ENCODE measurements at regions of chr17 and their contacts with region 1.

Region 1: GRCh38 chr17:63697341-63698286 is 2.3 kb downstream of the LIMD2 start:
- DNase-seq: peak in 4 of 5 donors; percentile 54 to 82 (median 60)
- ATAC-seq: peak in 3 of 4 donors; percentile 1 to 33 (median 29)
- H3K4me3 ChIP-seq: peak overlapping the region in 7 of 12 donors; percentile 4 to 76 (median 63)
- H3K27ac ChIP-seq: peak overlapping the region in 6 of 12 donors; percentile 13 to 96 (median 43)
- H3K4me1 ChIP-seq: peaks cover 0 to 54% (median 22%) of the 10 kb centered on the region in 12 donors
- H3K27me3 ChIP-seq: no peaks in the 10 kb centered on the region
- CTCF ChIP-seq: peak; percentile 13 to 67 (median 34)
- POLR2A ChIP-seq: no peak

Region 2: GRCh38 chr17:63621766-63622519 is 75.7 kb before region 1 on chr17 and contains the start of gene MAP3K3:
- intact Hi-C with region 1: loop called in 3 of 10 experiments (anchors 5 to 10 kb)
- DNase-seq: peak; percentile 98 to 100 (median 99)
- ATAC-seq: peak; percentile 95 to 98 (median 97)
- H3K4me3 ChIP-seq: peak within 1 kb of the TSS; percentile 67 to 96 (median 78)
- H3K27ac ChIP-seq: peak within 1 kb of the TSS; percentile 69 to 93 (median 88)
- H3K4me1 ChIP-seq: peaks cover 2 to 44% (median 37%) of the 10 kb centered on the region in 12 donors
- H3K27me3 ChIP-seq: no peaks in the 10 kb centered on the region
- CTCF ChIP-seq: peak in 4 of 12 donors; percentile 29 to 55 (median 48)
- POLR2A ChIP-seq: peak in 1 of 2 donors; percentile 87
- total RNA-seq, gene MAP3K3: 31.0 to 102 (median 58.0) TPM

Region 3: GRCh38 chr17:63634163-63634562 is 63.5 kb before region 1 on chr17:
- intact Hi-C with region 1: loop called in 3 of 10 experiments (anchors 5 to 10 kb)
- DNase-seq: peak in 1 of 5 donors; percentile 16
- ATAC-seq: peak in 3 of 4 donors; percentile 32 to 74 (median 60)
- H3K4me3 ChIP-seq: no peak overlapping the region
- H3K27ac ChIP-seq: peak overlapping the region in 11 of 12 donors; percentile 12 to 93 (median 51)
- H3K4me1 ChIP-seq: peaks cover 7 to 79% (median 55%) of the 10 kb centered on the region in 12 donors
- H3K27me3 ChIP-seq: no peaks in the 10 kb centered on the region
- CTCF ChIP-seq: no peak
- POLR2A ChIP-seq: no peak

Region 4: DNA sequence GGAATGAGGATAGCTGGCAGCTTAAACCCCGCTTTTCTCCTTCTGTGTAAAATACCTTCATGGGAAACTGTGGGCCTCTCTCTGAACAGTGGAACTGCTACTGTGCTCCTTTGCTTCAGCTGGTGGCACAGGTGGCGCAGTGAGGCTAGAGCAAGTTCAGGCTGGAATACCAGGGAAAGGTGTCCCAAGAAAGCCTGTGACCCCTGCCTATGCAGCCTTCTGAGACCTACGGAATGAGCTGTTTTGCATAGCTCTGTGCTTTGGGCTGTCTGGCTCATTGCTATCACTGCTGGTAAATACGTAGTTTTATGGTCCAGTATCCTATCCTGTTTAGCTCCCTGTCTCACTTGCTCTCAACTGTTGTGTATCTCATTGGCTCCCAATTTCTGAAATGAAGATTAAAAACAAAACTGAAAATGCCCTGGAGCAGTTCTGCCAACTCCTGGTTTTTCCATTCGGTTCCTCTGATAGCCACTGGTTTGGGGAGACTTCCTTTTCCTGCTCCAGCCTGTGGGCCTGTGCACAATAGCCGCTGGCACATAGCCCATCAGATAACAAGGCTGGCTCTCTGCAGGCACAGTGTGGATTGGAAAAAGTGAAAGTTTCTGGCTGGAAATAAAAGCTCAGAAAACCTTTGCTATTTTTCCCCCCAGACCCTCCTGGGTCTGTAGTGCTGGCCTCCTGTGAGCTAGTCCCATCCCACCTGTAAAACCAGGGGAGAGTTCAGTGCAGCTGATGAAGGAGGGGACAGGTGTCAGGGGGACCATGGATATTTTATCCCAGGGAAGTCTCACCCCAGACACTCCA is 21.8 kb before region 1 on chr17:
- intact Hi-C with region 1: loop called in 1 of 10 experiments (anchors 1 kb)
- DNase-seq: peak in 4 of 5 donors; percentile 82 to 87 (median 86)
- ATAC-seq: peak; percentile 84 to 93 (median 92)
- H3K4me3 ChIP-seq: peak overlapping the region in 10 of 12 donors; percentile 7 to 47 (median 33)
- H3K27ac ChIP-seq: peak overlapping the region; percentile 43 to 94 (median 86)
- H3K4me1 ChIP-seq: peaks cover 3 to 55% (median 37%) of the 10 kb centered on the region in 12 donors
- H3K27me3 ChIP-seq: no peaks in the 10 kb centered on the region
- CTCF ChIP-seq: no peak
- POLR2A ChIP-seq: no peak

Region 5: GRCh38 chr17:63741221-63742049 is 43.8 kb after region 1 on chr17 and contains the start of gene STRADA:
- intact Hi-C with region 1: loop called in 2 of 10 experiments (anchors 2 to 5 kb)
- DNase-seq: peak; percentile 98 to 99 (median 99)
- ATAC-seq: peak; percentile 99 to 100 (median 100)
- H3K4me3 ChIP-seq: peak within 1 kb of the TSS; percentile 61 to 95 (median 78)
- H3K27ac ChIP-seq: peak within 1 kb of the TSS; percentile 56 to 96 (median 90)
- H3K4me1 ChIP-seq: peaks cover 0 to 22% (median 12%) of the 10 kb centered on the region in 12 donors
- H3K27me3 ChIP-seq: no peaks in the 10 kb centered on the region
- CTCF ChIP-seq: peak in 1 of 12 donors; percentile 6
- POLR2A ChIP-seq: peak; percentile 9 to 86
- total RNA-seq, gene STRADA: 10.2 to 26.1 (median 15.3) TPM

Region 6: DNA sequence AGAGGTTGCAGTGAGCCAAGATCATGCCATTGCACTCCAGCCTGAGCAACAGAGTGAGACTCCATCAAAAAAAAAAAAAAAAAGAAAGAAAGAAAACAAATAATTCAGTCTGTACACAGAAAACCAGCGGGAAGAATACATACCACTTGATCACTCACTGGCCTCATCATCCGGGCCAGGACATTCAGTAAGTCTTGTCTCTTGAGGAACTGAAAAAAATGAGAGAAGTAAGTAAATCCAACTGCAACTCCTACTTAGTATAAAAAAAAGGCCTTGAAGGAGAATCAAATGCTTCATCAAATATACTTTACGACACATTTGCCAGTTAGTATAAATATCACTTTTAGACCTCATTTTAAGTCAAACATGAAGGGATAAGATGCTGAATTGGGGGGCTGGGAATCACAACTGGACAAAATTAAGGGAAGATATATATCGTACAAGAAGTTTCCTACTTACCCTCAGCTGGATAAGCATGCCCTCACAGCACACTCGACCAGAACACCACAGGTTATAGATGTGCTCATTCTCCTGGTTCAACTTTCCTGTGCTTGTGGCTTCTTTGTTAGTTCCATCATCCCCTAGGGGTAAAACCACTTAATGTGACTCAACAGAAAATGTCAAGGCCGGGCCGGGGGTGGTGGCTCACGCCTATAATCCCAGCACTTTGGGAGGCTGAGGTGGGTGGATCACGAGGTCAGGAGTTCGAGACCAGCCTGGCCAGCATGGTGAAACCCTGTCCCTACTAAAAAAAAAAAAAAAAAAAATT is 63.3 kb after region 1 on chr17:
- intact Hi-C with region 1: no loop called
- DNase-seq: no peak
- ATAC-seq: no peak
- H3K4me3 ChIP-seq: no peak overlapping the region
- H3K27ac ChIP-seq: peak overlapping the region in 1 of 12 donors; percentile 47
- H3K4me1 ChIP-seq: peaks cover 0 to 34% (median 0%) of the 10 kb centered on the region in 12 donors
- H3K27me3 ChIP-seq: no peaks in the 10 kb centered on the region
- CTCF ChIP-seq: no peak
- POLR2A ChIP-seq: no peak